Activated CD8-positive, alpha-beta T cell treated with anti-CD3 and anti-CD28 coated beads, Interleukin-2, amount 10 ng/mL, durations not matched to agents 7 days and 5 days (primary cell): ENCODE measurements at regions of chr13 and their contacts with region 1.

Region 1: DNA sequence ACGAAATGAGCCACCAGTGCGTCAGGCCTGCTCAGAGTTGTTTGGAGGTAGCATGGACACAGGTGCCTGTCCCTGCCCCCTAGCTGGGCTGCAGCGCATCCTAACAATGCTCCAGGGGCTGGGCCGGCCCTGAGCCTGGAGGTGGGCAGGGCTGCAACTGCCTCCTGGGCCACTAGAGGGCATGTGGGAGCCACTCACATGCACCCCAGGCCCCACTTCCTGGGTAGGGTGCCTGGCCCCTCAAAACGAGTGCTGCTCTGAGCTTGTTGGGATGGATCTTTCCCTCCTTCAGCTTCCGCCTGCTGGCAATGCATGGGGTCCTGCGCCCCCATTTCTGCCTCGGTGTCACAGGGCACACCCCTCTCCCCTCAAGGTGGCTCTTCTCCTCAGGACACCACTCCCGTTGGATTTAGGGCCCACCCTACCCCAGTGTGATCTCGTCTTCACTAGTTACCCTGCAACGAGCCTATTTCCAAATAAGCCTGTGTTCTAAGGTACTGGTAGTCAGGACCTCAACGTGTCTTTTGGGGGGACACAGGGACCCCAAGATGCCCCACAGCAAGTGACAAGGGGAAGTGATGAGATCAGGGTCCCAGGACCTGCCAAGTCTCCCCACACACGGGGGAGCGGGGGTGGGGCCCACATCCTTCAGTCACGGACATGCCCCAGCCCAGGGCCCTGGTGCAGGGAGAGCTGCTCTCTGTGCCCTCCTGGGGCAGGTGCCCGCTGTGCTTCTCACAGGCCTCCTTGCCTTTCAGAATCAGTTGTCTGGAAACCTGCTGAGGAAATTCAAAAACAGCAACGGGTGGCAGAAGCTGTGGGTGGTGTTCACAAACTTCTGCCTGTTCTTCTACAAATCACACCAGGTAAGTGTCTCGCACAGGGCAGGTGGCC is 131.3 kb downstream of the STK24 start:
- DNase-seq: peak; percentile 86
- ATAC-seq: peak; percentile 93
- H3K4me3 Mint-ChIP-seq: peak overlapping the region; percentile 34
- H3K27ac Mint-ChIP-seq: peak overlapping the region; percentile 87
- H3K4me1 Mint-ChIP-seq: peaks cover 19% of the 10 kb centered on the region
- H3K27me3 Mint-ChIP-seq: no peaks in the 10 kb centered on the region

Region 2: DNA sequence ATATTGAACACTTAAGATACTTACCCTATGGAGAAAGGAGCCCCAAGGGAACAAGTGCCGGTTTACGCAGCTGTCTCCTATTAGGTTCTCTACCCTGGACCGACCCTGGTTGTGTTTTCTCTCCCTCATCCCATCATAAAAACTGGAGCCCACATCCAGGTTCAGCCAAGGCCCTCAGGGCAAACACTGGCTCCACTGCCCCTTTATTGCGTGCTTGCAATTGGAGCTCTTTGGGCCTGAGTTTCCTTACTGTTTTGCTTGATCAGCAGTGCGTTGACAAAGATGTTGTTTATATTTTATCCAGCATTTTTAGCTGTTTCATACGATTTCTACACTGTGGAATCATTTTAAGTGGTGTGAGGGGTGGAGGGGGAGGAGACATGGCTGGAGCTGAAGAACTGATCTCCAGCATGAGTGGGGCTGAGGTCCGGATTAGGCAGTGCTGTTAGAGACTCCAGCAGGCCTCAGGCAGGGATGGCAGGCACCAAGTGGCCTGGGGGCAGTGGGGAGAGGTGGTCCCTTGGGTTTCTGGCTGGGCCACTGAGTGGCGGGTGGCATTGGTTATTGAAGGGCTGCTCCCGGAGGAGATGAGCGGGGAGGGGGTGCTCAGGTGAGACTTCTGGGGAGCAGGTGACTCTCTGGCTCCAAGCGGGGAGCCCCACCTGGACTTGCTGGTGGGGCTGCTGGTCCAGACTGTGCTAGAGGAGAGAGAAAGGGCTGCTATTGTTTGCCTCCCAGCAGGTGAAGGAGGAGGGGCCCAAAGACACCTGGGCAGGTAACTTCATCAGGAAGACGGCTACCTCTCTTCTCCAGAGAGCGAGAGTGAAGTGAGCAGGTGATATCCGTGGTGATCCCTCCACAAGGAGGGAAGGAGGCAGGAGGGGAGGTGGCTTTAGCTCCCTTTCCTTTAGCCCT is 206.2 kb before region 1 on chr13:
- CTCF ChIA-PET with region 1: no interaction called
- POLR2A ChIA-PET with region 1: no interaction called
- DNase-seq: no peak
- ATAC-seq: no peak
- H3K4me3 Mint-ChIP-seq: no peak overlapping the region
- H3K27ac Mint-ChIP-seq: no peak overlapping the region
- H3K4me1 Mint-ChIP-seq: no peaks in the 10 kb centered on the region
- H3K27me3 Mint-ChIP-seq: peaks cover 2% of the 10 kb centered on the region

Region 3: DNA sequence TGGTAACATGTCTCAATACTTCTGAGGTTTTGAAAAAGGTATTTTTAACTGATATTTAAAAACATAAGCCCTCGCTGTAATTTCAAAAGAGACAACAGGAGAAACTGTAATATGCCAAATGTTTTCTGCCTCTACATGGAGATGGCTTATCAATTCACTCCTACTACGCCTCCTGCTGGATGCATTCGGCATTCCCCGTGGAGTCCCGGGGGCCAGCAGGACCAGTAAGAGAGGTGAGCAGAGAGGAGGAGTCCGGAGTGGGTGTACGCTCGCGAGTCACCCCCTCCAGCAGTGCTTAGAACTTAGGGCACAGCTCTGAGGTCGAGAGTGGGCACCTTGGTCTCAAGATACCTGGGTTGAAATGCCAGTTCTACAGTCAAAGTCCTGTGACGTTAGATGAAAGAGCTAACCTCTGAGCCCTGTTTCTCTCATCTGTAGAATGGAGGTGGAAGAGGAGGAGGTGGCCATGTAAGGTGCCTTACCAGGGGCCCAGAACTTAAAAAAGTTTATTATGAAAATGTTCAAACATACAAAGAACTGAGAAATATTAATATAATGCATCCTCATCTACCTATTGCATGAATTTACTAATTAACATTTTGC is 21.1 kb after region 1 on chr13:
- CTCF ChIA-PET with region 1: interaction called, 20 read pairs
- POLR2A ChIA-PET with region 1: interaction called, 3 read pairs
- DNase-seq: peak; percentile 48
- ATAC-seq: peak; percentile 72
- H3K4me3 Mint-ChIP-seq: no peak overlapping the region
- H3K27ac Mint-ChIP-seq: peak overlapping the region; percentile 59
- H3K4me1 Mint-ChIP-seq: peaks cover 16% of the 10 kb centered on the region
- H3K27me3 Mint-ChIP-seq: no peaks in the 10 kb centered on the region

Region 4: GRCh38 chr13:98509271-98510155 is 63.9 kb after region 1 on chr13:
- CTCF ChIA-PET with region 1: interaction called, 11 read pairs
- POLR2A ChIA-PET with region 1: no interaction called
- DNase-seq: no peak
- ATAC-seq: peak; percentile 71
- H3K4me3 Mint-ChIP-seq: no peak overlapping the region
- H3K27ac Mint-ChIP-seq: peak overlapping the region; percentile 4
- H3K4me1 Mint-ChIP-seq: peaks cover 62% of the 10 kb centered on the region
- H3K27me3 Mint-ChIP-seq: no peaks in the 10 kb centered on the region

Region 5: GRCh38 chr13:98664924-98665637 is 219.5 kb after region 1 on chr13:
- CTCF ChIA-PET with region 1: interaction called, 11 read pairs
- POLR2A ChIA-PET with region 1: no interaction called
- DNase-seq: no peak
- ATAC-seq: no peak
- H3K4me3 Mint-ChIP-seq: no peak overlapping the region
- H3K27ac Mint-ChIP-seq: no peak overlapping the region
- H3K4me1 Mint-ChIP-seq: peaks cover 2% of the 10 kb centered on the region
- H3K27me3 Mint-ChIP-seq: peaks cover 15% of the 10 kb centered on the region

Region 6: GRCh38 chr13:98672944-98673545 is 227.5 kb after region 1 on chr13:
- CTCF ChIA-PET with region 1: interaction called, 28 read pairs
- POLR2A ChIA-PET with region 1: no interaction called
- DNase-seq: peak; percentile 66
- ATAC-seq: peak; percentile 74
- H3K4me3 Mint-ChIP-seq: no peak overlapping the region
- H3K27ac Mint-ChIP-seq: no peak overlapping the region
- H3K4me1 Mint-ChIP-seq: peaks cover 3% of the 10 kb centered on the region
- H3K27me3 Mint-ChIP-seq: peaks cover 8% of the 10 kb centered on the region